Posterior vena cava (tissue), 2 donors: ENCODE measurements at regions of chr3 and their contacts with region 1.

Region 1: GRCh38 chr3:185188816-185189215 is 36.0 kb upstream of the C3orf70 start:
- DNase-seq: no peak

Region 2: GRCh38 chr3:184884359-184885017 is 304.3 kb before region 1 on chr3:
- intact Hi-C with region 1: loop called in 1 of 2 experiments (anchors 10 kb)
- DNase-seq: no peak

Region 3: DNA sequence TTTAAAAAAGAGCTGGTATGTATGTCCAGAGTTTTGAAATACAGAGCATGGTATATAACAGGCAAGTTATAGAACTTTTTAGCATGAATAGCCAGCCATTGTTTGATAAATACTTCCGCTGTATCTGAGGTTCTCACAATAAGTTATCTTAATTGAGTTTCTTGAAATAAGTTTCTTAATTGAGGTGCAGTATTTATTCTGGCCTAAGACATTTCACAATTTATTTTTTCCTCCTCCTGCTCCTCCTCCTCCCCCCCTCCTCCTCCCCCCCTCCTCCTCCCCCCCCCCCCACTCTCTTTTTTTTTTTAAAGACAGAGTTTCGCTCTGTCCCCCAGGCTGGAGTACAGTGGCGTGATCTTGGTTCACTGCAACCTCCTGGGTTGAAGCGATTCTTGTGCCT is 293.5 kb before region 1 on chr3:
- intact Hi-C with region 1: no loop called
- DNase-seq: no peak

Region 4: DNA sequence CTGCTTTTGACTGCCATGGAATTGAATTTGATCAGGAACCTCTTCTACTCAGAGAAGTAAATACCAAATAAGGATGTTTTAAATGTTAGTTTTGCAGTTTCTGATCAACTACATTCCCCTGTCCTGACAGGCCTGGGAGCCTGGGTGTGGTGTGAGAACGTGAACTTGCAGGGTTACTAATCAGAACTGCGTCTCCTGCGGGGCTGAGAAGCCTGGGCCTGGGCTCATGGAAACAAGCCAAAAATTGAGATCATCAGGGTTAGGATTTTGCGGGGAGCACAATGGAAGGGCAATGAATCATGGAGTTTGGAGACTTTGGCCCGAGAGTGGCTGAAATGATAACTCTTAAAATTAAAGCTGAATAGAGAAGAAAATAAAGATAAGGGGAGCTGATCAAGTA is 11.8 kb after region 1 on chr3:
- intact Hi-C with region 1: no loop called
- DNase-seq: no peak